ENCODE measurements at regions of chr4 and their contacts with region 1.

Region 1: GRCh38 chr4:16916719-16917337 is 18.4 kb upstream of the LDB2 start:
- DNase-seq: peak; percentile 64
- CTCF ChIP-seq: peak; percentile 81

Region 2: GRCh38 chr4:16289897-16290554 is 626.8 kb before region 1 on chr4:
- in situ Hi-C with region 1: loop called (anchors 25 kb)
- DNase-seq: peak; percentile 35
- CTCF ChIP-seq: peak; percentile 32

Region 3: DNA sequence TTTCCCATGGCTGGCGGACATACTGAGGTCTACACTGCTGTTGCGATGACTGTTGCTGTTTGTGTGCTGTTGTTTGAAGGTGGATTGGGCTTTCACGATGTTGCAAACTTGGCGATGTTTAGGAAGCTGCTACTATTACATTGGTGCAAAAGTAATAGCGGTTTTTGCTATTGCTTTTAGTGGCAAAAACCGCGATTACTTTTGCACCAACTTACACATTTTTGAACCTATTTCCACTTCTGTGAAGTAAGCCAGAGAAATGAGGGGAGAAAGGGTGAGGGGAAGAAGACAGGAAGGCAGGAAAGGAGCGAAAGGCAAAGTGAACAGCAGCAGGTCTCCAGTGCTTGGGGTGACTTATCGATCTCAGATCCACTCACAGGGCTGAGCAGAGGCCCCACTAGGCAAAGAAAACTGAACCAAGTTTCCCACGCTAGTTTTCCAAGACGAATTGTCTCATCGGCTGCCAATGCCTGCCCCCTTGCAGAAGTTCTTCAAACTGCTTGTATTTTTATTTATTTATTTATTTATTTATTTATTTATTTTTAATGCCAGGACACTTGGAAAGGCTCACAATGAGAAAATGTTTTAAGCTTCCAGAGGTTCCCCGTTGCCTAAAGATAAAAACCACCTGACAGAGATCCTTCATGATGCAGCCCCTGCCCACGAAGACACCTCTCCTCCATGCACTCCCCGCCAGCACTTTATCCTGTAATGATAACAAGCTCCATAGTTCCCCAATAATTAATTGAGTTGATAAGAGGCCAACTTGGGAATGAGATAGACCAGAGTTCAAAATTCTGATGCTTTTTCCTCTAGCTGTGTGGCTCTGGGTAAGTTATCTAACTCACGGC is 551.8 kb after region 1 on chr4:
- in situ Hi-C with region 1: loop called (anchors 25 kb)
- DNase-seq: no peak
- CTCF ChIP-seq: no peak

Region 4: GRCh38 chr4:18105030-18106011 is 1188.5 kb after region 1 on chr4:
- in situ Hi-C with region 1: no loop called
- DNase-seq: peak; percentile 2
- CTCF ChIP-seq: no peak